ENCODE measurements at regions of chr9 and their contacts with region 1.

Region 1: DNA sequence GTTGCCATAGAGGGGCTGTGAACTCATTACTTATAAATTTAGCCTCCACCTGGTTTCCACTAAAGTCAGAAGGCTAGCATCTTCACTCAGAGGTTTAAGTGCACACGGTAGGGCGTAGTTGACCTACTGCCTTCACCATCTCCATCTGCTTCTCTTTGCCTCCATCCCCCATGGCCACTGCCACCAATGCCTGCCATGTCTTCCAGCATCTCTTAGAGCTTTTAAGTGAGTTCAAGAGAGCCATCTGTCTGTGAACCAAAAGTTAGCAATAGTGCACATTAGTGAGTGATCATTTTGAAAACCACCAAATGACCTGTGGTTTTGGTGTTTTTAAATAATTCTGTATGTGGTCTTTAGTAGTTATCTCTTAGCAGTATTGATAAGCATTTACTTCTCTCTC is 102.0 kb downstream of the DMRTA1 start:
- DNase-seq: no peak
- H3K4me3 ChIP-seq: no peak overlapping the region
- H3K27ac ChIP-seq: no peak overlapping the region
- H3K4me1 ChIP-seq: no peaks in the 10 kb centered on the region
- H3K27me3 ChIP-seq: no peaks in the 10 kb centered on the region
- CTCF ChIP-seq: no peak
- EP300 ChIP-seq: no peak
- POLR2A ChIP-seq: no peak

Region 2: GRCh38 chr9:22141906-22142305 is 406.7 kb before region 1 on chr9:
- in situ Hi-C with region 1: no loop called
- intact Hi-C with region 1: no loop called
- DNase-seq: no peak
- H3K4me3 ChIP-seq: no peak overlapping the region
- H3K27ac ChIP-seq: no peak overlapping the region
- H3K4me1 ChIP-seq: peaks cover 0 to 4% (median 0%) of the 10 kb centered on the region in 4 donors
- H3K27me3 ChIP-seq: no peaks in the 10 kb centered on the region
- CTCF ChIP-seq: no peak
- EP300 ChIP-seq: no peak
- POLR2A ChIP-seq: no peak

Region 3: GRCh38 chr9:23945897-23946296 is 1397.3 kb after region 1 on chr9:
- in situ Hi-C with region 1: no loop called
- intact Hi-C with region 1: loop called (anchors 5 kb)
- DNase-seq: no peak
- H3K4me3 ChIP-seq: no peak overlapping the region
- H3K27ac ChIP-seq: no peak overlapping the region
- H3K4me1 ChIP-seq: no peaks in the 10 kb centered on the region
- H3K27me3 ChIP-seq: no peaks in the 10 kb centered on the region
- CTCF ChIP-seq: no peak
- EP300 ChIP-seq: no peak
- POLR2A ChIP-seq: no peak